ENCODE measurements at regions of chr17 and their contacts with region 1.

Region 1: GRCh38 chr17:47970704-47971463 is at the start of gene CDK5RAP3:
- DNase-seq: peak; percentile 100
- H3K4me3 ChIP-seq: peak within 1 kb of the TSS; percentile 69
- H3K27ac ChIP-seq: peak within 1 kb of the TSS; percentile 78
- H3K4me1 ChIP-seq: peaks cover 8% of the 10 kb centered on the region
- H3K27me3 ChIP-seq: no peaks in the 10 kb centered on the region
- CTCF ChIP-seq: peak; percentile 99
- total RNA-seq, gene CDK5RAP3: 172 and 204 TPM in 2 replicates

Region 2: DNA sequence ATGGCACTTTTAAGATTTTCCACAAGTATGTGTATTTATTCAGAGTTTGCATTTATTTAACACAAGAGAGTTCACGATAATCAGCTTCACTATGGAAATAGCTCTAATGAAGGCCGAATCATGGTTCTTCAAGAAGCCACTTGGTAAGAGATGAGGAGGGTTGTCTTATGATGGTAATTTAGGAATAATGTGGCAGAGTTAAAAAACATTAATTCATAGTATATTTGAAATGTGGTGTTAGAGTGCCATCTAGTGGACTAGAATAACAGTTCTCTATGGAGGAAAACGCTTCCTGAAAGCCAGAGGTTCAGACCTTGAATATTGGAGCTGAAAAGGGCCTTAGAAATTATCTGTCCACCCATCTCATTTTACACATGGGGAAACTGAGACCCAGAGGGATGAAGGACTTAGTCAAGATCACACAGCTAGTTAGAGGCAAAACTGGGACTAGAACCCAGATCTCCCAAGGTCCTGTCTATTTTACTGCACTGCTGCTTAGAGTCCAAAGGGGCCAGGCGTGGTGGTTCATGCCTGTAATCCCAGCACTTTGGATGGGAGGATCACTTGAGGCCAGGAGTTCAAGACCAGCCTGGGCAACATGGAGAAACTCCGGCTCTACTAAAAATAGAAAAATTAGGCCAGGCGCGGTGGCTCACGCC is 355.0 kb before region 1 on chr17:
- CTCF ChIA-PET with region 1: no interaction called
- POLR2A ChIA-PET with region 1: no interaction called
- intact Hi-C with region 1: no loop called
- DNase-seq: peak; percentile 51
- H3K4me3 ChIP-seq: no peak overlapping the region
- H3K27ac ChIP-seq: no peak overlapping the region
- H3K4me1 ChIP-seq: no peaks in the 10 kb centered on the region
- H3K27me3 ChIP-seq: no peaks in the 10 kb centered on the region
- CTCF ChIP-seq: peak; percentile 59

Region 3: DNA sequence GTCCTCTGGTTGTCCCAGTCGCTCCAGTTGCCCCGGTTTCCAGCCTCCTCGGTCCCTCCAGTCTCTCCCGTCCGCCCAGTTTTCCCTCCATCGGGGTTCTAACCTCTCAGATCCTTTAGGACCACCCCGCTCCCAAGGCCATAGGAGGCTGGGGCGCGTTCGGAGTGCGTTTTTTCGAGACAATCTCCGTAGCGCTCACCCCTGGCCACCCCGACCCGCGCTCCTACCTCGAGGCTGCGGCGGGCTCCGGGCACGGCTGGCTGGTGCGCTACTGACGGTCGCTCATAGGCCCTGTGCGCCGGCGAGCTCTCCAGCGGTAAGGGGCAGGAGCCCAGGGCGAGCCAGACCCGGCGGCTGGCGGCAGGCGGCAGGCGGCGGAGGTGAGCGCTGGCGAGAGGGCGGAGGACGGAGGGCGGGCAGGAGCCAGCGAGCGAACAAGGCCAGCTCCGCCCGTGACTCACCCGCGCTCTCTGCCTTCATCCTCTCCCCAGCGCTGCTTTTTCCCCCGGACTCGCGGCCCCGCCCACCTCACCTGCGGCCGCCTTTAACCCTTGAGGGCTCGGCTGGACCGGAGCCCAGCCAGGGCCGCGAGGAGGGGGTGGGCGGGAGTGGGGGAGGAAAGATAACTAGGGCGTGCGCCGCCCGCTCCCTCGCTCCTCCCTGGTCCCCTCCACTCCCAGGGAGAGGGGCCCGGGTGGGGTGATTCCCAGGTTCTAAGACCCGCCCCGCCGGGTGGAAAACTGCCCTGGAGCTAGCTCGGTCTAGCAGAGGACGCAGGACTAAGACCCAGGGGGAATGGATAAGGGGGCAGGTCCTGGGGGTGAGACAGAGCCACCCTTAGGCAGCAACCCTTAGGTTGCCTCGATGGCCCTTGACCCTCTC is 120.0 kb before region 1 on chr17 and contains the start of gene SP6:
- CTCF ChIA-PET with region 1: no interaction called
- POLR2A ChIA-PET with region 1: no interaction called
- intact Hi-C with region 1: no loop called
- DNase-seq: no peak
- H3K4me3 ChIP-seq: no peak within 1 kb of the TSS
- H3K27ac ChIP-seq: no peak within 1 kb of the TSS
- H3K4me1 ChIP-seq: no peaks in the 10 kb centered on the region
- H3K27me3 ChIP-seq: peaks cover 97% of the 10 kb centered on the region
- CTCF ChIP-seq: no peak
- total RNA-seq, gene SP6: 0.15 and 0.66 TPM in 2 replicates

Region 4: DNA sequence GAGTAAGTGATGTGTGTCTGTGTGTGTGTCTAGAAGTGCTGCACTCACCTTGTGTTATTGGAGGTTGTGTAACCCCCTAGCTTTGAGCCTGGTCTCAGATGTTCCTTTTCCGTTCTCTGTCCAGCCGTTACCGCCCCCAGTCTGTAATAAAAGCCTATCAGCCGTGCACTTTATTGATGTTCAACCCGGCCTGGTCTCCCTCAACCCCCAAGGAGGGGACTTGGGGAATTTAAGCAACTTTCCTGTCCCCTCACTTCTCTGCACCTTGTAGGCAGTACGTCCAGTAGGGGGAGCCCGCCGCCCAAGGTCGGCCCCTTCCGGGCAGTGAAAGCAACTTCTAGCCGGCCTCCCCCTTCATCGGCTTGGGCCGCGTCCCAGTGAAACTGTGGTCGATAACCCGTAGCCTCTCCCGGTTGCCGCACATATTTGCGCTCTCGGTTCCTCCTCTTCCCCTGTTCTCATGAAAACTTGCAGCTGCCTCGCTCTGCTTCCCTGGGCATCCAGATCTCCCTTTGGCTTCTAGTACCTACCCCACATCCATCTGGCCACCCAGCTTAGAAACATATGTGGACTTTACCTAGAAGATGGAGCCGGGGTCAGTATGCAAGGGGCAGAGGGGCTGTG is 21.6 kb before region 1 on chr17:
- CTCF ChIA-PET with region 1: interaction called, 7 read pairs
- POLR2A ChIA-PET with region 1: no interaction called
- intact Hi-C with region 1: loop called (anchors 1 kb)
- DNase-seq: peak; percentile 80
- H3K4me3 ChIP-seq: no peak overlapping the region
- H3K27ac ChIP-seq: no peak overlapping the region
- H3K4me1 ChIP-seq: peaks cover 5% of the 10 kb centered on the region
- H3K27me3 ChIP-seq: no peaks in the 10 kb centered on the region
- CTCF ChIP-seq: peak; percentile 97

Region 5: DNA sequence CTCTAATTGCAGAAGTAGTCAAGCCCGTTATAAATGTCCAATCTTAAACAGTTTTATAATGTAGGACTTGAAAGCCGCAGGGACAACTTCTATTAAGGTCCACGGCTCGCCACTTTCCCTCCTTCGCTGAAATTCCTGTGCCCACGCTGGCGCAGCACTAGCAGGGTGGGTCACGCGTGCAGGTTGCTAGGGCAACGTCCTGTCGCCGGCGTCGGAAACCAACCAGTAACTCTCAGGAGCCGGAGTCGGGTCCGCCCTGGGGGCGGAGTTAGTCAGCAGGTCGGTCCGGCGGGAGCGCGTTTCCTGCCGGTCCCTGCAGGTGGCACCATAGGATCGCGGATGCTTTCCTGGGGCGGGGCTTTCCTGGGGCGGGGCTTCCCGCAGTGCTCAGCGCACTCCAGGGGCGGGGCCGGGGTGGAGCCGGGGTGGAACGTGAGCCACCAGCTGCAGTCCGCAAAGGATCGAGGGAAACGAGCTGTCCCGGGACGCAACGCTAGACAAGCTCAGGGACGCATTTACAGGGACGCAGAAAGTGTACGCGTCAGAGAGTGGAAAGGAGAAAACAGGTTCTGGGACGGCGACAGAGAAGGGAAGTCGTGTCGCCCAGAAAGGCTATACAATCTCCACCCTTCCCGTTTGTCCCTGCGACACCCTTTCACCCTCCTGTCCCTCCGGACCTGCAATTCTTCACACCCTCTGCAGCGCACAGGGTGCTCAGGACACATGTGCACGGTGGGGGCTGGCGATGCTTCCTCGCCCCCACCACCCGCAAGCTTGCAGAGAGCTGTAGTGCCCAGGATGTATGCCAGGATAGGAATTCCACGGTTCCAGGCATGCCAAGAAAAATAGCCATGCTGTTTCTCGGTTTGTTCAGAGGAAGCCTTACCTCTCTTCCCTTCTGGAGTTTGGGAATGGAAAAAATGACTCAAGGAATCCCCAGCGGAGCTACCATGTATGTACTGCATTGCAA is 54.3 kb after region 1 on chr17:
- CTCF ChIA-PET with region 1: no interaction called
- POLR2A ChIA-PET with region 1: no interaction called
- intact Hi-C with region 1: no loop called
- DNase-seq: peak; percentile 99
- H3K4me3 ChIP-seq: peak overlapping the region; percentile 46
- H3K27ac ChIP-seq: peak overlapping the region; percentile 57
- H3K4me1 ChIP-seq: peaks cover 44% of the 10 kb centered on the region
- H3K27me3 ChIP-seq: no peaks in the 10 kb centered on the region
- CTCF ChIP-seq: peak; percentile 95